Mammary epithelial cell (primary cell): ENCODE measurements at regions of chr12 and their contacts with region 1.

Region 1: GRCh38 chr12:49567611-49568441 is at the start of gene MCRS1:
- DNase-seq: peak; percentile 83
- H3K4me3 ChIP-seq: peak within 1 kb of the TSS; percentile 78 to 90 (median 83)
- H3K27ac ChIP-seq: peak within 1 kb of the TSS; percentile 80
- H3K4me1 ChIP-seq: peaks cover 10% of the 10 kb centered on the region
- H3K27me3 ChIP-seq: no peaks in the 10 kb centered on the region
- CTCF ChIP-seq: no peak
- total RNA-seq, gene MCRS1: 43.8 to 59.5 TPM

Region 2: GRCh38 chr12:49088190-49088931 is 479.5 kb before region 1 on chr12:
- CTCF ChIA-PET with region 1: no interaction called
- dilution Hi-C with region 1: no loop called
- in situ Hi-C with region 1: no loop called
- intact Hi-C with region 1: no loop called
- DNase-seq: peak; percentile 90
- H3K4me3 ChIP-seq: no peak overlapping the region
- H3K27ac ChIP-seq: no peak overlapping the region
- H3K4me1 ChIP-seq: peaks cover 26% of the 10 kb centered on the region
- H3K27me3 ChIP-seq: peaks cover 27% of the 10 kb centered on the region
- CTCF ChIP-seq: peak; percentile 88 to 90

Region 3: DNA sequence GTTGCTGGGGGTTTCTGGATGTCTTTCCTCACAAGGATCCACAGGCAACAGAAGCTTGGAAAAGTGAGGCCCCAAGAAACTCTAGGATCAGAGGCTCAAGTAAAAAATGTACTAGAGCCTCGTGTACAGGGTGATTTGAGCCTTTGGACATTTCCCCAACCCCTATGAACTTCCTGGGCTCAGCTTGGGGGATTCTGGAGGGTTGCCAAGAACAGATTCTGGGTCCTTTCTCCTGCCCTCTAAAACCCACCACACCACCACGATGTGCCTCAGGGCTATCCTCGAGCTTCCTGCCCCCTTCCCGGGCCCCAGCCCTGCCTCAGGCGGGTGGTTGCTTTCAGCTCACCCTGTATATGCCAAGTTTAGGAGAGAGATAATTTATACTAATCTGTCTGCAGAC is 37.0 kb after region 1 on chr12:
- CTCF ChIA-PET with region 1: no interaction called
- dilution Hi-C with region 1: loop called (anchors 5 kb)
- in situ Hi-C with region 1: no loop called
- intact Hi-C with region 1: no loop called
- DNase-seq: no peak
- H3K4me3 ChIP-seq: no peak overlapping the region
- H3K27ac ChIP-seq: no peak overlapping the region
- H3K4me1 ChIP-seq: no peaks in the 10 kb centered on the region
- H3K27me3 ChIP-seq: no peaks in the 10 kb centered on the region
- CTCF ChIP-seq: no peak

Region 4: GRCh38 chr12:49623142-49623904 is 55.5 kb after region 1 on chr12 and contains the start of gene PRPF40B:
- CTCF ChIA-PET with region 1: interaction called, 3 read pairs
- dilution Hi-C with region 1: no loop called
- in situ Hi-C with region 1: no loop called
- intact Hi-C with region 1: loop called (anchors 1 kb)
- DNase-seq: peak; percentile 79
- H3K4me3 ChIP-seq: peak within 1 kb of the TSS; percentile 57 to 74 (median 58)
- H3K27ac ChIP-seq: peak within 1 kb of the TSS; percentile 72
- H3K4me1 ChIP-seq: peaks cover 68% of the 10 kb centered on the region
- H3K27me3 ChIP-seq: no peaks in the 10 kb centered on the region
- CTCF ChIP-seq: peak in 1 of 2 donors; percentile 49
- total RNA-seq, gene PRPF40B: 8.0 to 34.4 TPM